Left ventricle myocardium inferior (tissue), 1 donor: ENCODE measurements at regions of chr16 and their contacts with region 1.

Region 1: DNA sequence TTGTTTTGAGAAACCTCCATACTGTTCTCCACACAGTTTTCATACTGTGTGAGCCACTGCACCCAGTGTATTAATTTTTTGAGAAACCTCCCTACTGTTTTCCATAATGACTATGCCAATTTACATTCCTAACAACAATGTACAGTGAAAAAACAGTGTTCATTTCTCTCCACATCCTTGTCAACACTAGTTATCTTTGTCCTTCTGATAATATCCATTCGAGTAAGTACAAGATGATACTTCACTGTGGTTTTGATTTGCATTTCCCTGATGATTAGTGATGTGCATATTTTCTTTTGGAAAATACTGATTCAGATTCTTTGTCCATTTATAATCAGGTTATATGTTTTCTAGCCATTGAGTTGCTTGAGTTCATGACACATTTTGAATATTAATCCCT is 462.0 kb downstream of the CDH11 start:
- DNase-seq: no peak
- H3K4me3 ChIP-seq: no peak overlapping the region
- H3K27ac ChIP-seq: no peak overlapping the region
- H3K4me1 ChIP-seq: no peaks in the 10 kb centered on the region
- H3K27me3 ChIP-seq: no peaks in the 10 kb centered on the region
- CTCF ChIP-seq: no peak

Region 2: GRCh38 chr16:63776437-63776836 is 883.4 kb before region 1 on chr16:
- intact Hi-C with region 1: loop called (anchors 5 kb)
- DNase-seq: no peak
- H3K4me3 ChIP-seq: no peak overlapping the region
- H3K27ac ChIP-seq: no peak overlapping the region
- H3K4me1 ChIP-seq: no peaks in the 10 kb centered on the region
- H3K27me3 ChIP-seq: no peaks in the 10 kb centered on the region
- CTCF ChIP-seq: no peak

Region 3: DNA sequence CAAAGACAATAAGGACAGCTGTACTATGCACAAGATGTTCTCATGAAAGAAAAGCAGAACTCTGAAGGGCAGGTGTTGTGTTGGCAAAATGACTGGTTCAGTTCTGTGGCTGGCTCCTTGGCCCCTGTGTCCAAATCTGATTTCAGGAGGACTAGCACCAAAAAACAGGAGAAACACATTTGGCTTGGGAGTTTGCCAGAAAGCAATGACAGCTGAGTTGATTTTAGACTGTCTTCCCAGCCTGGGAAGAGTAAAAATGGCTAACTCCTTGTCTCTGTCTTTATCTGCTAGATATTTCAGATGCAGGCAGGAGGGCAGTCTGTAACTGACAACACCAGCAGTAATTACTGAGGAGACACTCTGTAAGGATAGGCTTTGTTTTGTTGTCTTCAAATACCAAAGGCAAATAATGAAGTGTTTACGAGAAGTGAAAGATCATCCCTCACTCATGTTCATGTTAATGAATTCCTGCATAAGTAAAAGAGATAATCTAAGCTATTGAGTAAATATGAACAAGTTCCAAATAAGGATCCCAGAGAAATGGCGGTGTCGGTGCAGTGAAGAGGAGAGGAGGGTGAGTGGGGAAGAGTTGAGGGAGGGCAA is 527.0 kb before region 1 on chr16:
- intact Hi-C with region 1: no loop called
- DNase-seq: no peak
- H3K4me3 ChIP-seq: no peak overlapping the region
- H3K27ac ChIP-seq: peak overlapping the region; percentile 32
- H3K4me1 ChIP-seq: peaks cover 4% of the 10 kb centered on the region
- H3K27me3 ChIP-seq: no peaks in the 10 kb centered on the region
- CTCF ChIP-seq: no peak